ENCODE measurements at regions of chr19 and their contacts with region 1.

Region 1: DNA sequence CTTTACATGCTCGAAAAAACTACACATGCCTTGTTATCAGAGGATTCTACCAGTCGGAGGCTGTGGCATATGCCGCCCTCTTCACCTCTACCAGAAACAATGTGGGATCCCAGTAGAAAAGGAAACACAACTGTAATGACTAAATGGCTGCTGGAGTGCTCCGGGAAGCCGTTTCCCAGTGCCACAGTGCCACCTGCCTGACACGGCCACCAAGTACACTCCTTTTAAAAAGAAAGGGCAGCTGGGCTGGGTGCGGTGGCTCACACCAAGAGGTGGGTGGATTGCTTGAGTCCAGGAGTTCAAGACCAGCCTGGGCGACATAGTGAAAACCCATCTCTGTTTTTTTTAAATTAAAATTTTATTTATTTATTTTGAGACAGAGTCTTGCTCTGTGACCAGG is 67.3 kb downstream of the TRPM4 start:
- DNase-seq: no peak
- CTCF ChIP-seq: peak; percentile 32

Region 2: GRCh38 chr19:49210108-49210900 is 14.6 kb before region 1 on chr19:
- CTCF ChIA-PET with region 1: interaction called, 32 read pairs
- POLR2A ChIA-PET with region 1: no interaction called
- DNase-seq: no peak
- CTCF ChIP-seq: no peak

Measured in GM10248 (cell line).